ENCODE measurements at regions of chr4 and their contacts with region 1.

Region 1: DNA sequence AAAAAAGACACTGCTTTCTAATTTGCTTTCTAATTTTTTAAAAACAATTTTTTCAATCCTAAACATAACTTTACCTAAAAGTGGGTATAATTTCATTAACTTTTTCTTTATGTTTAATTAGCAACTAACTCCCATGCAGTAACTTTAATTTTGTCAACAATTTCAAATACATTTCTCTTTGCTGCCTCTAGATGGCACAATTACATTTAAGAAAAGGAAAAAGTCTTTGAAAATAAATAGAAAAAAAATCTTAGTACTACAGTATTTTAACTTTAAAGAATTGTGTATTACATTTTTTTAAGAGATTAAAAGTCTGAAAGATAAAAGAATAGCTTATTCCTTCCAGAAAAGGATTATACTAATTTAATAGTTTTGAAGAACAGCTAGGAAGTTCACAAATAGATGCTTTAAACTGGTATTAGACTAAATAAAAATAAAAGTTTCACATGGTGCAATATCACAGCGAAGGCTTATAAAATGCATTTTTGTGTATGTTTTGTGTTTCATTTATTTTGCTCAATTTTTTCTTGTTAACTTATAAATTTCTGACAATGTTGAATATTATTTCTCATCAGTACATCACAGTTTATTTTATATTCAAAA is 105.1 kb downstream of the ADGRA3 start:
- DNase-seq: no peak
- ATAC-seq: no peak
- H3K4me3 ChIP-seq: no peak overlapping the region
- H3K27ac ChIP-seq: no peak overlapping the region
- H3K4me1 ChIP-seq: no peaks in the 10 kb centered on the region
- H3K27me3 ChIP-seq: no peaks in the 10 kb centered on the region
- CTCF ChIP-seq: peak; percentile 24 to 58 (median 46); a peak in 3 of 6 replicates
- POLR2A ChIP-seq: no peak
- RAD21 ChIP-seq: peak; percentile 61

Region 2: GRCh38 chr4:22607382-22607781 is 196.6 kb after region 1 on chr4:
- CTCF ChIA-PET with region 1: interaction called, 24 read pairs
- POLR2A ChIA-PET with region 1: no interaction called
- RAD21 ChIA-PET with region 1: no interaction called
- intact Hi-C with region 1: loop called (anchors 1 kb)
- DNase-seq: peak; percentile 54
- ATAC-seq: peak; percentile 100
- H3K4me3 ChIP-seq: no peak overlapping the region
- H3K27ac ChIP-seq: no peak overlapping the region
- H3K4me1 ChIP-seq: 0 out of 4 replicates have a peak, but pooled peaks cover 0 to 2% of the 10 kb centered on the region in 2 experiments
- H3K27me3 ChIP-seq: no peaks in the 10 kb centered on the region
- CTCF ChIP-seq: peak; percentile 41 to 74 (median 59); a peak in 5 of 6 replicates
- POLR2A ChIP-seq: no peak
- RAD21 ChIP-seq: peak; percentile 80